HEK293T (cell line): ENCODE measurements at regions of chr10 and their contacts with region 1.

Region 1: GRCh38 chr10:30433730-30434272 is at the start of gene MAP3K8:
- DNase-seq: peak; percentile 60

Region 2: GRCh38 chr10:30048768-30049517 is 384.9 kb before region 1 on chr10:
- CTCF ChIA-PET with region 1: no interaction called
- POLR2A ChIA-PET with region 1: no interaction called
- DNase-seq: no peak

Region 3: DNA sequence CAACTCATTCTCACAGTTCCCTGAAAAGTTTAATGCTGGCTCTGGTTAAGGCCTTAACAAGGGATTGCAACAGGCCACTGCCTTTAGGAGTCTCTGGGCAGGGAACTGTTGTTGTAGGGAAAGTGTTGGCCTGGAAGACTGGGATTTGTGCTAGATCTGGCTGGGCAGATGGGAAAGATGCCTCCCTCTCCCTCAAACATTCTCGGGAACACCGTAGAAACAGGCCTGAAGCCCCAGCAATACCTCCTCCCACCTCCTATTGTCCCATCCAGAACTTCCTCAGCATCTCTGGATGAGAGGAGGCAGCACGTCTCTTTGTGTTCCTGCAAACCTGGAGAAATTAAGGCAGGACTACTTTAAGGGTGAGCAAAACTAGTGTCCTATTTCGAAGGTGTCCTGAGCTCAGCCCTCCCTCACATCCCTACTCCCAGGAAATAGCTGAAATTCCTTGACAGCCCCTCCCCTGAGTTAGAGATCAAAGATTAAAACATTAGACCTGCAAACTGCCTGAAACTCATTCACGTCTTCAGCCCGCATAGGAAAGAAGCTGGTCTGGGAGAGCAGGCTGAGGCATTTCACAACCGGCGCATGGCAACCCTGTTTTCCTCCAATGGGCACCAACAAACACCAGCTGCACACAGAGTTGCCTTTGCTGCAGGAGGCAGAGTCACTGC is 10.7 kb before region 1 on chr10:
- CTCF ChIA-PET with region 1: interaction called, 5 read pairs
- POLR2A ChIA-PET with region 1: interaction called, 13 read pairs
- DNase-seq: no peak

Region 4: GRCh38 chr10:30447125-30447799 is 13.5 kb after region 1 on chr10:
- CTCF ChIA-PET with region 1: no interaction called
- POLR2A ChIA-PET with region 1: no interaction called
- DNase-seq: no peak